Breast epithelium (tissue), 4 donors: ENCODE measurements at regions of chr12 and their contacts with region 1.

Region 1: GRCh38 chr12:83390186-83390585 is 703.5 kb downstream of the TMTC2 start:
- DNase-seq: no peak
- H3K4me3 ChIP-seq: no peak overlapping the region
- H3K27ac ChIP-seq: no peak overlapping the region
- H3K4me1 ChIP-seq: no peaks in the 10 kb centered on the region
- H3K27me3 ChIP-seq: no peaks in the 10 kb centered on the region
- CTCF ChIP-seq: no peak
- POLR2A ChIP-seq: no peak

Region 2: GRCh38 chr12:82981162-82981561 is 409.0 kb before region 1 on chr12:
- intact Hi-C with region 1: loop called (anchors 10 kb)
- DNase-seq: no peak
- H3K4me3 ChIP-seq: no peak overlapping the region
- H3K27ac ChIP-seq: no peak overlapping the region
- H3K4me1 ChIP-seq: no peaks in the 10 kb centered on the region
- H3K27me3 ChIP-seq: no peaks in the 10 kb centered on the region
- CTCF ChIP-seq: no peak
- POLR2A ChIP-seq: no peak

Region 3: GRCh38 chr12:83318386-83319098 is 71.6 kb before region 1 on chr12:
- intact Hi-C with region 1: no loop called
- DNase-seq: no peak
- H3K4me3 ChIP-seq: no peak overlapping the region
- H3K27ac ChIP-seq: no peak overlapping the region
- H3K4me1 ChIP-seq: no peaks in the 10 kb centered on the region
- H3K27me3 ChIP-seq: no peaks in the 10 kb centered on the region
- CTCF ChIP-seq: no peak
- POLR2A ChIP-seq: no peak